Adrenal gland (tissue), 19 donors: ENCODE measurements at regions of chr5 and their contacts with region 1.

Region 1: DNA sequence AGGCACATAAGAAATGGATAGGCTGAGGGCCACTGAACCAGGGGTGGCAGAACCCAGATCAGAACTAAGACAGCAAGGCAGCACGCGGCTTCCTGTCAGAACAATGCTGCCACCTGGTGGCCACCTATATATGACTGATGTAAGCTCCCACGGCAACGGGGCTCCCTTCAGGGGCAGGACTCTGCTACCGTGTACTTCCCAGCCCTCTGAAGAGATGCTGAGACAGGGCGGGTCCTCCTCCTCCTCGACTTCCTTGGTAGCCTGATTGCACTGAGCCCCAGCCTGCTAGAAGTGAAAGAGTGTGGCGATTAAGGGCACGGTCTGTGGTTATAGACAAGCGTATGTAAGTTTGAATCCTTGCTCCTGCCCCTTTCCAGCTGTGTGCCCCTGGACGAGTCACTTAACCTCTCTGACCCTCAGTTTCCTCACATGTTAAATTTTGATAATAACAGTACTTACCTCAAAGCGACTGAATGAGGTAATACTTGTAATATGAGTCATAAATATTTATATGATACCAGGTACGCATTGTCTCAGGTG is 13.3 kb downstream of the RPS14 start:
- DNase-seq: peak; percentile 84 to 97 (median 94)
- H3K4me3 ChIP-seq: no peak overlapping the region
- H3K27ac ChIP-seq: no peak overlapping the region
- H3K4me1 ChIP-seq: no peaks in the 10 kb centered on the region
- H3K27me3 ChIP-seq: no peaks in the 10 kb centered on the region
- CTCF ChIP-seq: peak; percentile 77 to 90 (median 86)
- POLR2A ChIP-seq: no peak

Region 2: DNA sequence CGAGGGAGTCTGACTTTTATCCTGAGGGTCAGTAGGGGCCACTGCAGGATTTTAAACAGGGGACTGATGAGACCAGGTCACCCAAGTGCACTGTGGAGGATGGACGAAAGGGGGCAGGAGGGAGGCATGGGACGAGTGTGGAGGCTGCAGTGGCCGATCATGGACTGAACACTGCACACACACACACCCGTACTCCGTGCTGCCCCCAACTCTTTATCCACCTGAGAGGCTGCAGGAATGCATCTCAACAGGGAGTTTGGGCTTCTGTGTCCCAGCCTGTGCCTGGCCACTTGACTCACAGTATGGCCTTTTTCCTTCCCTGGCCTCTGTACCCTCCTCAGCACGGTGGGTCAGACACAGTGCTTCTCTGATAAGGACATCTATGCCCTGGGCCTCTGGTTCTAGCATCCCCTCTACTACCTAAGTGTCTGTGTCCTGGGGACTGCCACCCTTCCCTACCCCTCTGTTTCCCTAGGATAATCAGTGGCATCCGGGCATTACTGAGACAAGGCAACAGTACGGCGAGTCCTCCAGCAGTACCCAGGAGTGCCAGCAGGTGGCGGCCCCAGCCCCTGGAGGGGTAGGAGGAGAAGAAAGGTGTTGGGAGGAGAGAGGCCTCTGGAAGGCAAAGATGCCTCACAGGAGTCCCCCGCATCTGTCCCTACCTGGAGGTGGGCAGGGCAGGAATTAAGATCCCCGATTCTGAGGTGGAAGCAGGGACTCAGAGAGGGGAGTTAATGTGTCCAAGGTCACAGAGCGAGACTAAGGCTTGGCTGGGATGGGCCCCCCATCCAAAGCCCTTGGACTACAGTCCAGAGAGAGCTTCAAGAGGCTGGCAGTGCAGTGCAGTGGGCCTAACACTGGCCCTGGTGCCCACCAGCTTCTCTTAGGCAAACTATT is 274.7 kb before region 1 on chr5:
- intact Hi-C with region 1: loop called (anchors 5 to 10 kb)
- DNase-seq: peak; percentile 76 to 91 (median 80)
- H3K4me3 ChIP-seq: no peak overlapping the region
- H3K27ac ChIP-seq: peak overlapping the region in 1 of 5 donors; percentile 85
- H3K4me1 ChIP-seq: peaks cover 1% of the 10 kb centered on the region in 2 donors
- H3K27me3 ChIP-seq: peaks cover 2% of the 10 kb centered on the region
- CTCF ChIP-seq: peak; percentile 87 to 95 (median 91)
- POLR2A ChIP-seq: no peak

Region 3: DNA sequence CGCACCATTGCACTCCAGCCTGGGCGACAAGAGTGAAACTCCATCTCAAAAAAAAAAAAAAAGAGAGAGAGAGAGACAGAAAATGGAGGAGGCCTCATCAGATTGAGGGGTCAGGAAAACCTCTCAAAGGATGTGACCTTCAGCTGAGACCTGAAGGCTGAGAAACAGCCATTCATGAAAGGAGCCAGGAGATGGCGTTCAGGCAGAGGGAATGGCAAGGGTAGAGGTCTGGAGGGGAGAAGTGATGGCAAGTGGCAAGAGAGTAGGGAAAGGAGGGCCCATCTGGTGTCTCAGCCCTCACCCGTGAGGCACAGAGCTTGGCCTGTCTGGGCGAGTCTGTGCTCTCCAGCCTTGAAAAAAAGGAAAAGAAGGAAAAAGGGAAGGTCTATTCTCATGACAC is 163.7 kb before region 1 on chr5:
- intact Hi-C with region 1: loop called (anchors 5 to 10 kb)
- DNase-seq: peak in 6 of 7 donors; percentile 28 to 55 (median 44)
- H3K4me3 ChIP-seq: no peak overlapping the region
- H3K27ac ChIP-seq: no peak overlapping the region
- H3K4me1 ChIP-seq: no peaks in the 10 kb centered on the region
- H3K27me3 ChIP-seq: no peaks in the 10 kb centered on the region
- CTCF ChIP-seq: peak; percentile 6 to 58 (median 48)
- POLR2A ChIP-seq: no peak

Region 4: GRCh38 chr5:150544611-150545219 is 108.5 kb after region 1 on chr5:
- intact Hi-C with region 1: no loop called
- DNase-seq: peak; percentile 78 to 87 (median 82)
- H3K4me3 ChIP-seq: no peak overlapping the region
- H3K27ac ChIP-seq: peak overlapping the region in 1 of 5 donors; percentile 29
- H3K4me1 ChIP-seq: peaks cover 22 to 35% of the 10 kb centered on the region in 2 donors
- H3K27me3 ChIP-seq: no peaks in the 10 kb centered on the region
- CTCF ChIP-seq: peak; percentile 73 to 91 (median 84)
- POLR2A ChIP-seq: no peak